Mammary epithelial cell (primary cell): ENCODE measurements at regions of chr1 and their contacts with region 1.

Region 1: GRCh38 chr1:101043776-101044175 is 18.2 kb upstream of the DPH5 start:
- DNase-seq: peak; percentile 25
- H3K4me3 ChIP-seq: no peak overlapping the region
- H3K27ac ChIP-seq: no peak overlapping the region
- H3K4me1 ChIP-seq: no peaks in the 10 kb centered on the region
- H3K27me3 ChIP-seq: no peaks in the 10 kb centered on the region
- CTCF ChIP-seq: peak in 1 of 2 donors; percentile 36

Region 2: GRCh38 chr1:101089613-101090338 is 46.0 kb after region 1 on chr1:
- CTCF ChIA-PET with region 1: no interaction called
- dilution Hi-C with region 1: no loop called
- in situ Hi-C with region 1: no loop called
- intact Hi-C with region 1: loop called (anchors 10 kb)
- DNase-seq: no peak
- H3K4me3 ChIP-seq: no peak overlapping the region
- H3K27ac ChIP-seq: no peak overlapping the region
- H3K4me1 ChIP-seq: no peaks in the 10 kb centered on the region
- H3K27me3 ChIP-seq: no peaks in the 10 kb centered on the region
- CTCF ChIP-seq: no peak